GM18951 (cell line): ENCODE measurements at regions of chr12 and their contacts with region 1.

Region 1: GRCh38 chr12:112924986-112925385 is 13.3 kb upstream of the OAS3 start:
- POLR2A ChIP-seq: peak; percentile 30

Region 2: GRCh38 chr12:111569363-111570083 is 1355.5 kb before region 1 on chr12:
- in situ Hi-C with region 1: loop called (anchors 10 kb)
- POLR2A ChIP-seq: no peak